ENCODE measurements at regions of chr17 and their contacts with region 1.

Region 1: GRCh38 chr17:1365445-1366039 is 34.5 kb downstream of the YWHAE start:
- DNase-seq: peak; percentile 86
- H3K4me3 ChIP-seq: no peak overlapping the region
- H3K27ac ChIP-seq: no peak overlapping the region
- H3K4me1 ChIP-seq: peaks cover 28% of the 10 kb centered on the region
- H3K27me3 ChIP-seq: no peaks in the 10 kb centered on the region
- CTCF ChIP-seq: peak; percentile 72 to 75
- POLR2A ChIP-seq: no peak

Region 2: GRCh38 chr17:1347589-1348323 is 17.8 kb before region 1 on chr17:
- CTCF ChIA-PET with region 1: interaction called, 20 read pairs
- POLR2A ChIA-PET with region 1: no interaction called
- dilution Hi-C with region 1: no loop called
- intact Hi-C with region 1: no loop called
- DNase-seq: peak; percentile 67
- H3K4me3 ChIP-seq: peak overlapping the region in 1 of 3 experiments; percentile 7
- H3K27ac ChIP-seq: peak overlapping the region; percentile 46
- H3K4me1 ChIP-seq: peaks cover 11% of the 10 kb centered on the region
- H3K27me3 ChIP-seq: no peaks in the 10 kb centered on the region
- CTCF ChIP-seq: no peak
- POLR2A ChIP-seq: no peak

Region 3: GRCh38 chr17:1390433-1391367 is 25.2 kb after region 1 on chr17:
- CTCF ChIA-PET with region 1: interaction called, 73 read pairs
- POLR2A ChIA-PET with region 1: no interaction called
- dilution Hi-C with region 1: no loop called
- intact Hi-C with region 1: no loop called
- DNase-seq: no peak
- H3K4me3 ChIP-seq: no peak overlapping the region
- H3K27ac ChIP-seq: no peak overlapping the region
- H3K4me1 ChIP-seq: peaks cover 14% of the 10 kb centered on the region
- H3K27me3 ChIP-seq: no peaks in the 10 kb centered on the region
- CTCF ChIP-seq: no peak
- POLR2A ChIP-seq: no peak

Region 4: DNA sequence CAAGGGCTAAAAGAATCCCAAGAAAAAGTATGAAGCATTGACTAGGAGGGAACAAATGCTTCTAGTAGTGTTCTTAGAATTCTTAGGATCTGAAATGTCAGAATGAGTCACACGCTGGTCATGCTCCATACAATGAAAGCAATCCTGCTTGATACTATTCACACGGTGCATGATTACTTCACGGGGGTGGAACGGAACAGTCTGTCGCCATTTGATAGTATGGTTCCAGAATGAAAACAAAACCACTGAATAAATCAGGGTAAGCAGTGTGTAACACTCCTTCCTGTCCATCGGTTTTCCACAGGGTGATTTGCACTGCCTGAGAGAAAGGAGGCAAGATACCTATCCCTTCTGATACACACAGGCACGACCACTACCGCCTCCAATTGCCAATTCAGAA is 57.4 kb after region 1 on chr17:
- CTCF ChIA-PET with region 1: interaction called, 21 read pairs
- POLR2A ChIA-PET with region 1: no interaction called
- dilution Hi-C with region 1: no loop called
- intact Hi-C with region 1: no loop called
- DNase-seq: peak; percentile 98
- H3K4me3 ChIP-seq: peak overlapping the region in 1 of 3 experiments; percentile 3
- H3K27ac ChIP-seq: peak overlapping the region; percentile 90
- H3K4me1 ChIP-seq: peaks cover 25% of the 10 kb centered on the region
- H3K27me3 ChIP-seq: no peaks in the 10 kb centered on the region
- CTCF ChIP-seq: no peak
- POLR2A ChIP-seq: no peak

Region 5: GRCh38 chr17:1455797-1456599 is 90.5 kb after region 1 on chr17 and contains the start of gene CRK:
- CTCF ChIA-PET with region 1: interaction called, 24 read pairs
- POLR2A ChIA-PET with region 1: interaction called, 4 read pairs
- dilution Hi-C with region 1: no loop called
- intact Hi-C with region 1: loop called (anchors 2 kb)
- DNase-seq: peak; percentile 97
- H3K4me3 ChIP-seq: peak within 1 kb of the TSS; percentile 83 to 95 (median 89)
- H3K27ac ChIP-seq: peak within 1 kb of the TSS; percentile 91
- H3K4me1 ChIP-seq: peaks cover 18% of the 10 kb centered on the region
- H3K27me3 ChIP-seq: no peaks in the 10 kb centered on the region
- CTCF ChIP-seq: no peak
- POLR2A ChIP-seq: peak; percentile 98
- total RNA-seq, gene CRK: 67.2 and 71.3 TPM in 2 replicates

Region 6: GRCh38 chr17:1495265-1495989 is 129.9 kb after region 1 on chr17:
- CTCF ChIA-PET with region 1: interaction called, 20 read pairs
- POLR2A ChIA-PET with region 1: no interaction called
- dilution Hi-C with region 1: no loop called
- intact Hi-C with region 1: no loop called
- DNase-seq: no peak
- H3K4me3 ChIP-seq: no peak overlapping the region
- H3K27ac ChIP-seq: no peak overlapping the region
- H3K4me1 ChIP-seq: peaks cover 24% of the 10 kb centered on the region
- H3K27me3 ChIP-seq: no peaks in the 10 kb centered on the region
- CTCF ChIP-seq: no peak
- POLR2A ChIP-seq: no peak

Region 7: DNA sequence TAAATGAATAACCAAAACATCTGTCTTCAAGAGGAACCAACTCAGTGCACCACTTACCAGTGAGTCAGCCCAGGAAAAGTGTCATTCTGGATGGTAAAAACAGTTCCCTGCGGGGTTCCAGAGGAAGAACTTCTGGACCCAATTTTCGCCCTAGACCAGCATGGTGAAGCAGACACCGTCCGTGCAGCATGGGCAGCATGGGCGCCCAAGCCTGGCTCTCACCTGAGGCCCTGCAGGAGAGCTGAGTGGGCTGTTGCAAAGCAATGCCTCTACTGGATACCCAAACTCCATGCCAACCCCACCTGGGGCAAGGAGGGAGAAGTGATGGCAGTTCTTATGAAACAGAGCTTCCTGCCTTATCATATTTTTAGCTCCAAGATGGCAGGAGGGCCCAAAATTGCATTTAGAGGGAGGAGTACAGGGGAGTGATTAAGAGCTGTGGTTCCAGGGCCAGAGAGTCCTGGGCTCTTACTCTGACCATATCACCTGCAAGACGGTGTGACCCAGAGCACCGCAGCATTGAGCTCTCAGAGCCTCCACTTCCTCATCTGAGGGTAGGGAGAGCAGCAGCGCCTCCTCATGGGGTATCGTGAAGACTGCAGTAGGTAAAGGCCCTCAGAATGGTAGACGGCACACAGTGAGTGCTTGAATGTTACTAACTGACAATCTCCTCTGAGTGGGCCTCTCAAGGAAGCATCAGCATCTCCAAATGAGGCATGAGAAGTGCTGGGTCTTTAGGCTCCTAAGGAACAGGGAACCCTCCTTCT is 167.5 kb after region 1 on chr17:
- CTCF ChIA-PET with region 1: interaction called, 15 read pairs
- POLR2A ChIA-PET with region 1: no interaction called
- dilution Hi-C with region 1: no loop called
- intact Hi-C with region 1: no loop called
- DNase-seq: no peak
- H3K4me3 ChIP-seq: no peak overlapping the region
- H3K27ac ChIP-seq: no peak overlapping the region
- H3K4me1 ChIP-seq: no peaks in the 10 kb centered on the region
- H3K27me3 ChIP-seq: no peaks in the 10 kb centered on the region
- CTCF ChIP-seq: peak; percentile 32 to 49
- POLR2A ChIP-seq: no peak